OCI-LY7 (cell line): ENCODE measurements at regions of chr16 and their contacts with region 1.

Region 1: GRCh38 chr16:88479793-88480760 is 27.0 kb downstream of the ZFPM1 start:
- DNase-seq: peak; percentile 78
- H3K4me3 ChIP-seq: peak overlapping the region; percentile 36
- H3K27ac ChIP-seq: peak overlapping the region; percentile 47
- H3K4me1 ChIP-seq: peaks cover 54% of the 10 kb centered on the region
- CTCF ChIP-seq: no peak

Region 2: GRCh38 chr16:88639231-88640038 is 159.4 kb after region 1 on chr16:
- CTCF ChIA-PET with region 1: no interaction called
- POLR2A ChIA-PET with region 1: no interaction called
- intact Hi-C with region 1: loop called (anchors 5 kb)
- DNase-seq: no peak
- H3K4me3 ChIP-seq: no peak overlapping the region
- H3K27ac ChIP-seq: no peak overlapping the region
- H3K4me1 ChIP-seq: peaks cover 29% of the 10 kb centered on the region
- CTCF ChIP-seq: no peak